ENCODE measurements at regions of chr16 and their contacts with region 1.

Region 1: DNA sequence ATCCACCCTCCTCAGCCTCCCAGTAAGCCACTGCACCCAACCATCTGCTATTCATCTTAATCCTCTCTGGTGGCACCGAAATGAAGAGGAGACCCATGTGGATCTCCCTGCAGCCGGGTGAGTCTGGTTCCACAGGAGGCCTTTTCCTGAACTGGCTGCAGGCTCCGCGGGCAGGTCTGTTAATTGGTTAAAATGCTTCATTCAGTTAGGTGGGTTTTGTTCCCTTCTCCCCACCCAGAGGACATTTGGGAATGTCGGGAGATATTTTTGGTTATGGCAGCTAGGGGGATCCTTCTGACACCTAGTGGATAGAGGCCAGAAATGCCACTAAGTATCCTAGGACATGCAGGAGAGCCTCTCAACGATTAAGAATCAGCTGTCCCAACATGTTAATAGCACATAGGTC is 16.7 kb downstream of the C16orf54 start:
- DNase-seq: peak in 1 of 35 experiments; percentile 33
- ATAC-seq: no peak
- H3K4me3 ChIP-seq: no peak overlapping the region
- H3K4me3 Mint-ChIP-seq: no peak overlapping the region
- H3K27ac ChIP-seq: no peak overlapping the region
- H3K27ac Mint-ChIP-seq: no peak overlapping the region
- H3K4me1 ChIP-seq: peaks cover 0 to 26% of the 10 kb centered on the region in 2 experiments
- H3K4me1 Mint-ChIP-seq: peaks cover 25 to 39% (median 34%) of the 10 kb centered on the region in 3 donors
- H3K27me3 ChIP-seq: no peaks in the 10 kb centered on the region
- H3K27me3 Mint-ChIP-seq: no peaks in the 10 kb centered on the region

Region 2: DNA sequence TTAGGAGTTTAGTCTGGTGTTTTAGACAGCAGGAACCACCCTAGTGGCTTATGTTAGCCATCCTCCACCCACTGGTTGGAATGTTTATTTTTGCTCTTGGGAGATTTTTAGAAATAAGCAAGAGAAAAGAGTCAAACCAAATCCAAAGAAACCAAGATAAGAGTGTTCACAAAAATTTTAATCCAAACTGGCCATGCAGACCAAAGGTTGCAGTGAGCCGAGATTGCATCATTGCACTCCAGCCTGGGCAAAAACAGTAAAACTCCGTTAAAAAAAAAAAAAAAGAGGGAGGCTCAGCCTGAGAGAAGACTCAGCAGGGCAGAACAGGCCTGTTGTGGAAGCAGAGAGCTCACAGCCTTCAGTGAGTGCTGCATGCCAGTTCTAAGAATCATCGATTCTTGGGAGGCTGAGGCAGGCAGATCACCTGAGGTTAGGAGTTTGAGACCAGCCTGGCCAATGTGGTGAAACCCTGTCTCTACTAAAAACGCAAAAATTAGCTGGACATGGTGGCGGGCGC is 28.9 kb after region 1 on chr16:
- CTCF ChIA-PET with region 1: interaction called, 10 read pairs
- POLR2A ChIA-PET with region 1: no interaction called
- DNase-seq: no peak
- ATAC-seq: no peak
- H3K4me3 ChIP-seq: no peak overlapping the region
- H3K4me3 Mint-ChIP-seq: peak overlapping the region in 1 of 3 donors; percentile 30
- H3K27ac ChIP-seq: no peak overlapping the region
- H3K27ac Mint-ChIP-seq: peak overlapping the region; percentile 25 to 61
- H3K4me1 ChIP-seq: peaks cover 23 to 47% of the 10 kb centered on the region in 2 experiments
- H3K4me1 Mint-ChIP-seq: peaks cover 35 to 45% (median 42%) of the 10 kb centered on the region in 3 donors
- H3K27me3 ChIP-seq: no peaks in the 10 kb centered on the region
- H3K27me3 Mint-ChIP-seq: no peaks in the 10 kb centered on the region

Region 3: DNA sequence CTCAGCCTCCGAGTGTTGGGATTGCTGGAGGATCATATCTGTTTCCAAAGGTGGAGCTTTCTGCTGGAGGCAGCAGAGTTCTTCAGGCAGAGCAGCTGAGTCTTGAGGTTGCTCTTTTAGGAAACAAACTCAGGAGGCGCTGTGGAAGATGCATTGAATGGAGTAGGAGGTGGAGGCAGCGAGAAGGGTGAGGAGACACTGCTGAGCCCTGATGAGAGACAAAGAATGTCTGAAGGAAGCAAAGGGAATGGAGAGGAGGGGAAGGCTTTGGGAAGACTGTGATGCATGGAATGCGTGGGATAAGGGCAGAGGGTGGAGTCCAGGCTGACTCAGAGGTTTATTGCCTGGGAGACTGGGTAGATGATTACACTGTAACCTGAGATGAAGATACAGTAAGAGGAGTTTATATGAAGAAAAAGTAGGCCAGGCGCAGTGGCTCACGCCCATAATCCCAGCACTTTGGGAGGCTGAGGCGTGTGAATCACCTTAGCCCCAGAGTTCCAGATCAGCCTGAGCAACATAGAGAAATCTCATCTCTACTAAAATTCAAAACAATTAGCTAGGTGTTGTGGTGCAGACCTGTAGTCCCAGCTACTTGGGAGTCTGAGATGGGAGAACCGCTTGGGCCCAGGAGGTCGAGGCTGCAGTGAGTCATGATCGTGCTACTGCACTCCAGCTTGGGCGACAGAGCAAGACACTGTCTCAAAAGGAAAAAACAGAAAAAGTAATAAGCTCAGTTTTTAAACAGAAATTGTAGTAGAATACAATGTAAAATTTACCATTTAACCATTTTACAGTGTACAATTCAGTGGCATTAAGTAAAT is 214.9 kb after region 1 on chr16:
- CTCF ChIA-PET with region 1: no interaction called
- POLR2A ChIA-PET with region 1: no interaction called
- DNase-seq: no peak
- ATAC-seq: no peak
- H3K4me3 ChIP-seq: no peak overlapping the region
- H3K4me3 Mint-ChIP-seq: no peak overlapping the region
- H3K27ac ChIP-seq: no peak overlapping the region
- H3K27ac Mint-ChIP-seq: peak overlapping the region in 1 of 2 donors; percentile 16
- H3K4me1 ChIP-seq: no peaks in the 10 kb centered on the region
- H3K4me1 Mint-ChIP-seq: peaks cover 2 to 12% (median 7%) of the 10 kb centered on the region in 3 donors
- H3K27me3 ChIP-seq: peaks cover 0 to 12% of the 10 kb centered on the region in 2 experiments
- H3K27me3 Mint-ChIP-seq: peaks cover 0 to 9% of the 10 kb centered on the region in 2 donors

Measured in T-cell (primary cell).